ENCODE measurements at regions of chr15 and their contacts with region 1.

Region 1: DNA sequence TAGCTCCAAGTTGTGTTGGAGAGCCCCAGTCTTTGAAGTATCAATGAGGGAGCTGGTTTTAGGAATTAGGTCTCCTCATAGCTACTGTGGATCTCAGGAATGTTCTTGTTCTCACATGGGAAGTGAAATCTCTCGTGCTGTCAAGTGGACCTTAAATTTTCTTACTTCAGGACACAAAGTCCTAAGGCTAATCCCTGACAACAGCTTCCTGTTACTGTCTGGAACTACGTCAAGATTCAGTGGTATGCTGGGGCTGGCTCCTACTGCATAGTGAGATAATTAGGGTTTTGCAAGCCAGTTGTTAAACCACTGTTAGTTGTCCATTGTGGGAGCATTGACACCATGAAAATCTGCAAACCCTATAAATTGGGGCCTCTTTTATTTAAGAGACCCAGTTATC is 22.8 kb downstream of the MESP1 start:
- DNase-seq: no peak
- ATAC-seq: no peak
- H3K4me3 Mint-ChIP-seq: no peak overlapping the region
- H3K27ac Mint-ChIP-seq: no peak overlapping the region
- H3K4me1 Mint-ChIP-seq: no peaks in the 10 kb centered on the region
- H3K27me3 Mint-ChIP-seq: peaks cover 2% of the 10 kb centered on the region

Region 2: DNA sequence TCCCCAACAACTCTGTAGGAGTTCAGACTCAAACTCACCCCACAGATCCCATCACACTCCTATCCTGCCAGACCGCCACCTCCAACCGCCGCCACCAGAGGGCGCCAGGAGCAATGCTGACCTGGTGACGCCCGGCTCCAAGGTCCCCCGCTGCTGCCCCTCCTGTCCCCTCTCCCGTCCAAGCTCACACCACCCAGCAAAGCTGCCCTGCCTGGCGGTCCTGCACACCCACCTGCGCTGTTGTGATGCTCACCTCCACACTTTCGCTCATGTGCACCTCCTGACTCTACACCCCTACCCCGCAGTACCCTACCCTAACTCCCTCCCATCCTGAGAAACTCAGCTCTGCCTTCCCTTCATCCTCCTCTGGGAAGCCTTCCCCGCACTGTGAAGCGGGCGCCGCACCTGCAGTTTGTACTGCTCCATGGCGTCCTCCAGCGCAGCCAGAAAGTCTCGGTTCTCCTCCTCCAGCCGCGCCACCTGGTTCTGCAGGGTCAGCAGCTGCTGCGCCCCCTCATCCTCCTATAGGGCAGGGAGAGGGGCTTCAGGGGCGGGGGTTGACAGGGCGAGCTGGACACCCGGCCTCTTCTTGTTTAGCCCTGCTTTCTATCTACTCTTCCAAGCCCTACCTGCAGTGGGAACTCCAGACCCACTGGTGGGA is 80.9 kb before region 1 on chr15:
- CTCF ChIA-PET with region 1: no interaction called
- POLR2A ChIA-PET with region 1: no interaction called
- intact Hi-C with region 1: no loop called
- DNase-seq: peak; percentile 86
- ATAC-seq: peak; percentile 90
- H3K4me3 Mint-ChIP-seq: no peak overlapping the region
- H3K27ac Mint-ChIP-seq: no peak overlapping the region
- H3K4me1 Mint-ChIP-seq: no peaks in the 10 kb centered on the region
- H3K27me3 Mint-ChIP-seq: peaks cover 6% of the 10 kb centered on the region

Region 3: GRCh38 chr15:89794627-89795241 is 66.5 kb after region 1 on chr15:
- CTCF ChIA-PET with region 1: no interaction called
- POLR2A ChIA-PET with region 1: no interaction called
- intact Hi-C with region 1: loop called in 1 of 2 experiments (anchors 5 kb)
- DNase-seq: no peak
- ATAC-seq: no peak
- H3K4me3 Mint-ChIP-seq: no peak overlapping the region
- H3K27ac Mint-ChIP-seq: no peak overlapping the region
- H3K4me1 Mint-ChIP-seq: no peaks in the 10 kb centered on the region
- H3K27me3 Mint-ChIP-seq: peaks cover 2% of the 10 kb centered on the region

Measured in activated CD4-positive, alpha-beta T cell treated with anti-CD3 and anti-CD28 coated beads for 36 hours (primary cell).